ENCODE measurements at regions of chr14 and their contacts with region 1.

Region 1: GRCh38 chr14:96852823-96853422 is 55.7 kb downstream of the VRK1 start:
- DNase-seq: peak; percentile 5
- H3K4me3 ChIP-seq: no peak overlapping the region
- CTCF ChIP-seq: peak; percentile 51

Region 2: DNA sequence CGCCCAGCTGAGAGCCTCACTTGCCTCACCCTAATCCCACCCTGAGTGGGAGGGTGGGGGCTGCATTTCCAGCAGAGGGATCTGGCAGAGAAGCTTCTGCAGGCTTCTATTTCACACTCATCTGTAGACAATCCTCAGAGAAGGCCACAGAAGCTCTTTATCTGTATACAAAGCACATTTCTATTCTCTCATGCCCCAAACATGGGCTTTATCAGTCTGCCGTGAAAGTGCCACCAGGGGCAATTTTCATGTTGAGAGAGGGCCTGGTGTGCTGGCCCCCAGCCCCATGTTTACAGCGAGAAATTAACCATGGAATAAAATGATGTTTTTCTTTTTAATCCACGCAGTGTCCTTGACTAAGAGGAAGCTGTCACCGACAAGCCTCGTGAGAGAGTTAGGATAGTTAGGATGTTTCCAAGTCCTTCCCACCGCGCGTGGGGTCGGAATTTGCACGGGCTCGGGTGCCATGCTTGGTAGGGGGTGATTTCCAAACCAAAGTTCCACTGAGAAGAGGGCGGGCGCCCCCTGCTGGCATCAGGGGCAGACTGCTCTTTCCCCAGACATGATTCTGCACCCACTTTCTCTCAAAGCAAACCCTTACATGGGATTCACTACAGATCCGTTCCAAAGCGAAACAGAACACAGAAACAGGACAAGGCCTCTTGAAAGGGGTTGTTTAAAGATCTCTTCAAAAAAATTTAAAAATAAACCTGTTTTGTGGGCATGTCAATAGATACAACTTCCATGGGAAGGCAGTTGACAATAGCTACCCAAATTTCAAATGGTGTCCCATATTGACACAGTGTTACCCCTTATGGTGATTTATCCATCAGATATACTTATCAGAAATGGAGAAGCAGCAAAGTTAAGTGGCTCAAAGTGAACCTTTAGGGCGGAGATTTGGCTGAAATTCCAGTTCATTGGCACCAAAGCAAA is 577.5 kb before region 1 on chr14:
- CTCF ChIA-PET with region 1: no interaction called
- POLR2A ChIA-PET with region 1: no interaction called
- DNase-seq: peak; percentile 52
- H3K4me3 ChIP-seq: no peak overlapping the region
- CTCF ChIP-seq: peak; percentile 97

Region 3: GRCh38 chr14:96681829-96682228 is 171.1 kb before region 1 on chr14:
- CTCF ChIA-PET with region 1: no interaction called
- POLR2A ChIA-PET with region 1: no interaction called
- DNase-seq: no peak
- H3K4me3 ChIP-seq: no peak overlapping the region
- CTCF ChIP-seq: no peak

Region 4: DNA sequence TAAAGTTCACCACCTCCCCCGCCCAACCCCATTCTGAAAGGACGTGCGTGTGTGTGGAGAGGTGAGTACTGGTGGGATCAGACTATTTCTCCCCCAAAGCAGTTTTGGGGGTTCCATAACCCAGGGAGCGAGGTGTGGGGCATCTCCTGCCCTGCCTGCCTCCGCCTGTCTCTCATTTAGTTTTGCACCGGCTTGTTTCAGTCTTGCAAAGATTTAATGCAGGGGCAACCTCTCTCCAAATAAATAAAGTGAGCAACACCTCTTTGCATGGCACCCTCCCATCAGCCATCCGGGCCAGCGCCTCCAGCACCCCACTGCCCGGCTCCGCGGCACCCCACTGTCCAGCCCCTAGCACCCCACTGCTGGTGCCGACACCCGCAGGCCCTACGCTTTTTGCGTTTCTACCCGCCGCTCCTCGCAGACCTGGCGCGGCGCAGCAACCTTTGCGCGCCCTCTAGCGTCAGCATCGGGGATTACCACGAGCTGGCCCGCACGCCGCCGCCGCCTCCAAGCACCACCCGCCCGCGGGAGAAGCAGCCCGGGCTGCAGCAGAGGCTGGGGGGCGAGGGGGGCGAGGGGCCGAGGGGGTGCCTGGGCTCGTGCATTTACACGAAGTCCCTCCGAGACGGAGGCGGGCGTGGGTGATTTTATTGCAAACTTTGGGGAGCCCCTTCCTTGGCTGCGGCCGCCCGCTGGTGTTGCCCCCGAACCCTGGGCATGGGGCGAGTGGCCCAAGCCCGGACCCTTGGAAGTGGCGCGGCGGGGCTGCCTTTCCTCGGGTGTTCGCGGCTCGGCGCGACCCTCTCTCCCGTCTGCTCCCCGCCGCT is 111.6 kb before region 1 on chr14:
- CTCF ChIA-PET with region 1: interaction called, 17 read pairs
- POLR2A ChIA-PET with region 1: no interaction called
- DNase-seq: no peak
- H3K4me3 ChIP-seq: peak overlapping the region; percentile 65
- CTCF ChIP-seq: peak; percentile 98

Region 5: GRCh38 chr14:96827290-96827689 is 25.6 kb before region 1 on chr14:
- CTCF ChIA-PET with region 1: interaction called, 15 read pairs
- POLR2A ChIA-PET with region 1: no interaction called
- DNase-seq: no peak
- H3K4me3 ChIP-seq: no peak overlapping the region
- CTCF ChIP-seq: no peak

Region 6: DNA sequence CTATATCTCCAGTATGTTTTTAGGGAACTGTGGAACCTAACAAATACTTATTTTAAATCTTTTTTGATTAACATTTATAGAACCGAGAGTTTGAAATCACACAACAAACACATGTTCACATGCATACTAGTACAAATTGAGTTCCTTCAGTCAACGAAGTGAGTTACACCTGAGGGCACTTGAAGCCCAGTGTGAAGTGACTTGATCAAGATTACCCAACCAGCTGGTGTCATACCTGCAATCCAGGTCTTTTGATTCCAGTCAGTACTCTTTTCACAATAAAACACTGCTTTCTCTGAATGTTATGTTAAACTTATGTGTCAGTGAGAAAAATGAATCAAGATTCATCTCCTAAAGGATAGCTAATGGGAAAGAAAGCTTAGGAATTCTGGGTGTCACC is 20.6 kb before region 1 on chr14:
- CTCF ChIA-PET with region 1: interaction called, 15 read pairs
- POLR2A ChIA-PET with region 1: no interaction called
- DNase-seq: no peak
- H3K4me3 ChIP-seq: no peak overlapping the region
- CTCF ChIP-seq: no peak

Region 7: DNA sequence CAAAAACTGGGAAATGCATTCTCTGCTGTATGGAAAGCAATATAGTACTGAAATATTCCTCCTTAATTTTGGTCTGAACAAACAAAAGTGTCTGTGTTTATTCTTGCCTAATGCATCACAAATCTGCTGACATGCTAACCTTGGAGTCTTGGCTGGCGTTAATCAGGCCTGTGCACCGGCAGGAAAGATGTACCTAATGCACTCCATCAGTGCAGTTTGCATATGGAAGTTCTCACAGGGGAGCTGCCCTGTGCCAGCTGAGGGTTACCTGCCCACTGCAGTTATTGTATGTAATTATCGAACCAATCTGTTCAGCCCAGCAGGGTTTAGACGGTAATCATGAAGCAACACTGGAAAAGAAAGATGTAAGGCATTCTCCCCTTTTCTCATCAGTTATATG is 21.2 kb after region 1 on chr14:
- CTCF ChIA-PET with region 1: interaction called, 10 read pairs
- POLR2A ChIA-PET with region 1: no interaction called
- DNase-seq: no peak
- H3K4me3 ChIP-seq: no peak overlapping the region
- CTCF ChIP-seq: no peak

Measured in AG04449 (cell line).